AG04450 (cell line): ENCODE measurements at regions of chr2 and their contacts with region 1.

Region 1: GRCh38 chr2:200483729-200484198 is 26.1 kb downstream of the KCTD18 start:
- DNase-seq: no peak
- H3K4me3 ChIP-seq: no peak overlapping the region
- H3K27ac ChIP-seq: no peak overlapping the region
- H3K27me3 ChIP-seq: no peaks in the 10 kb centered on the region
- CTCF ChIP-seq: peak; percentile 54

Region 2: GRCh38 chr2:199979832-199980628 is 503.7 kb before region 1 on chr2:
- CTCF ChIA-PET with region 1: interaction called, 17 read pairs
- POLR2A ChIA-PET with region 1: no interaction called
- DNase-seq: peak; percentile 63
- H3K4me3 ChIP-seq: peak overlapping the region; percentile 11; the same call in 1 of the 2 replicates
- H3K27ac ChIP-seq: no peak overlapping the region
- H3K27me3 ChIP-seq: no peaks in the 10 kb centered on the region
- CTCF ChIP-seq: peak; percentile 81

Region 3: DNA sequence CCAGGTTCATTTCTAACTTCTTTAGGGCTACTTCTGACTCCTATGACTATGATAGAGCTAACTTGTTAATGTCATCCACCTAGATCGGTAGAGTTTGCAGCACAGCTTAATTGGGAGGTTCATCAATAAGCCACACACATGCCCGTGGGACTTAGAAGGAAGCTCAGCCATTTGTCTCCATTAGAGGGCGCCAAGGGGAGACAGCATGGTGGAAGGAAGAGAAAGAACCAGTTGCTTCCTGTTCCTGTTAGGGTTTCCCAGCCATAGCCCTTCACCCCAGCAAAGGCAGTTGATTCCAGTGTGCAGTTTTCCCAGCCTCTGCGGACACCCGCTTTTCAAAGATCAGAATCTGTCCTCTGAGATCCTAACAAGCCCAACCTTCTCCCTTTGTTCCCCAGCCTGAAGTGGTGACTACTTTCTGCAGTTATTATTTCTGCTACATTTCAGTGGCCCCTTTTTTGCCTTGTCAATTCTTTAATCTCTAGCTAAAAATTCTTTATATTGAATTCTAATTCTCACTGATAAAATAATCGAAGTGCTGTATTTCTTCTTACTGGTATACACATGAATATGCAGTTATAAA is 498.0 kb before region 1 on chr2:
- CTCF ChIA-PET with region 1: interaction called, 13 read pairs
- POLR2A ChIA-PET with region 1: no interaction called
- DNase-seq: peak; percentile 34
- H3K4me3 ChIP-seq: no peak overlapping the region
- H3K27ac ChIP-seq: no peak overlapping the region
- H3K27me3 ChIP-seq: no peaks in the 10 kb centered on the region
- CTCF ChIP-seq: peak; percentile 74

Region 4: DNA sequence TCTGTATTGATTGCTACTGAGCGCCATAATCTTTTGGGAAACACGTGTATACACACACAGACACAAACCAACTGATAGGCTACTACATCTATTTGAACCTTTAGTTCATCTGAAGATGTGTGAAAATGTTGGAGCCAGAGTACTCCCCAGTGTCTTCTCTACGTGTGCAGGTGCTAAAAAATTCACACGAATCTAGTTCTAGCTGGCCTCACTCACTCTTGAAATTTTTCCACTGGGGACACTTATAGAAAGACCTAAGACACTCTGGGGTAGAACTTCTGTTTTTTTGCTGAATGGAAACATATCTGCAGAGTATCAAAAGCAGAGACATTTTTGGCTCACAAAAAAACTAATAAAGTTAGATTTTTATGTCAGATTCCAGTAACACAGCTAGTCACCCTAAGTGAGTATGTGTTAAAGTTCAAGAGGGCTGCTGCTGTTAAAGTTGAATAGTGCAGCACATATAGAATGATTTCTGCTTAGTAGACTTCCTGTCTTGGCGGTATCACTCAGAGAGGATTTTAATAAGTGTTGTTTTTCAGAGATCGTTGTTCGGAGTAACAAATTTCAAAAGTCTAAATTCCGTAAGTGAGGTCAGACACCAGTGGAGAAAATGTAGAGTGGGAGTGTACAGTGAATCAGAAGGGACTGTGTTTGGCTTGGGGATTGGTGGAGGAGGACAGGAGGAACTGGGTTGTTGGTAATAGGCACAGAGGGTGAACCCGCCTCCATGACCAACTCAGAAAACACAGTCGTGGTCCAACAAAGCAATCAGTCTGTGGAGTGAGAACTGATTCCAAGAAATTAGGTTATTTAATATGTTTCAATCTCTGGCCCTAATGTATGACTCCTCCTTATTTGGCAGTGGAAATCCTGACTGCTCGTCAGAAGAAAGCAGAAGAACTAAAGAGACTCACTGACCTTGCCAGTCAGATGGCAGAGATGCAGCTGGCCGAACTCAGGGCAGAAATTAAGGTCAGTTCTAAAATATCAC is 17.0 kb before region 1 on chr2:
- CTCF ChIA-PET with region 1: interaction called, 10 read pairs
- POLR2A ChIA-PET with region 1: no interaction called
- DNase-seq: no peak
- H3K4me3 ChIP-seq: no peak overlapping the region
- H3K27ac ChIP-seq: no peak overlapping the region
- H3K27me3 ChIP-seq: no peaks in the 10 kb centered on the region
- CTCF ChIP-seq: no peak

Region 5: DNA sequence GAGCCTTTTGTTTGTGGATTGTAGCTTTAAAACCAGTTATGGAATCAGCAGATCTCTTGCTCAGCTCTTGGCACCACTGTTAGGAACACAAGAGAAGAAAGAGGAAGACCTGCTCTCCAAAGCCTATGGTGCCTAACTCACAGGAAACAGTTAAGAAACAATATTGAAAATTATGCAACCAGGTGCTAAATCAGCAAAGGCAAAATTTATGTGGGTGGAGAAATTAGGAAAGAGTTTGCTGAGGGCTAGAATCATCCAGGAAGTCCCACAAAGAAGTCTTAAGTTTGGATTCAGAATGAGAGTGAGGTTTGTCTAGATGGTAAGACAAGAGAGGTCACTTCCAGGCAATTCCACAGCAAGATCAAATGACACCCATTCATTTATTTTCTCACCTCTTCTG is 151.5 kb after region 1 on chr2:
- CTCF ChIA-PET with region 1: no interaction called
- POLR2A ChIA-PET with region 1: no interaction called
- DNase-seq: no peak
- H3K4me3 ChIP-seq: no peak overlapping the region
- H3K27ac ChIP-seq: no peak overlapping the region
- H3K27me3 ChIP-seq: no peaks in the 10 kb centered on the region
- CTCF ChIP-seq: no peak

Region 6: GRCh38 chr2:200778038-200778437 is 294.3 kb after region 1 on chr2:
- CTCF ChIA-PET with region 1: no interaction called
- POLR2A ChIA-PET with region 1: no interaction called
- DNase-seq: no peak
- H3K4me3 ChIP-seq: no peak overlapping the region
- H3K27ac ChIP-seq: no peak overlapping the region
- H3K27me3 ChIP-seq: no peaks in the 10 kb centered on the region
- CTCF ChIP-seq: no peak